BJ (cell line): ENCODE measurements at regions of chr5 and their contacts with region 1.

Region 1: DNA sequence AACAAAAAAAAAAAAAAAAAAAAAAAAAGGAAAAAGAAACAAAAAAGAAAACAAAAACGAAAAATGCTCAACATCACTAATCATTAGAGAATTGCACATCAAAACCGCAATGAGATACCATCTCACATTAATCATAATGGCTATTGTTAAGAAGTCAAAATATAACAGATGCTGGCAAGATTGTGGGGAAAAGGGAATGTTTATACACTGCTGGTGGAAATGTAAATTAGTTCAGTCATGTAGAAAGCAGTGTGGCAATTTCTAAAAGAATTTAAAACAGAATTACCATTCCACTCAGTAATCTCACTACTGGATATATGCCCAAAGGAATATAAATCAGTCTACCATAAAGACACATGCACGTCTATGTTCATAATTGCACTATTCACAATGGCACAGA is 50.4 kb upstream of the PRR16 start:
- DNase-seq: no peak
- H3K4me3 ChIP-seq: no peak overlapping the region
- H3K27me3 ChIP-seq: no peaks in the 10 kb centered on the region
- CTCF ChIP-seq: no peak

Region 2: DNA sequence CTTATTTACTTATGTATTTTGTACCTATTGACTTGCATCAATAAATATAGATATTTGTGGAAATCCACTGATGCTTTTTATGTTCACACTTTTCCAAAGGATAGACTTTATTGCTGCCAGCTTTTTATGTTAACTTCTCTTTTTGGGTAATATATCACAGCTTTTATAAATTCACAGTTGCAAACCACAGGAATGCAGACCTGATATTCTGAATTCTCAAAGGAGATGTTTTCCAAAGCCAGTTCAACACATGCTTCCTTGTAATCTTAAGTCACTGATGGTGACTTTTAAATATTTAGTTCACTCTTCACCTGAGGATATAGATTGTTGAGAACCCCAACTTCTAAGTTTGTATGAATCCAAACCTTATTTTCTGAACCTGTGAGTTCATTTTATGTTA is 173.0 kb before region 1 on chr5:
- CTCF ChIA-PET with region 1: no interaction called
- POLR2A ChIA-PET with region 1: interaction called, 15 read pairs
- DNase-seq: no peak
- H3K4me3 ChIP-seq: no peak overlapping the region
- H3K27me3 ChIP-seq: no peaks in the 10 kb centered on the region
- CTCF ChIP-seq: no peak

Region 3: DNA sequence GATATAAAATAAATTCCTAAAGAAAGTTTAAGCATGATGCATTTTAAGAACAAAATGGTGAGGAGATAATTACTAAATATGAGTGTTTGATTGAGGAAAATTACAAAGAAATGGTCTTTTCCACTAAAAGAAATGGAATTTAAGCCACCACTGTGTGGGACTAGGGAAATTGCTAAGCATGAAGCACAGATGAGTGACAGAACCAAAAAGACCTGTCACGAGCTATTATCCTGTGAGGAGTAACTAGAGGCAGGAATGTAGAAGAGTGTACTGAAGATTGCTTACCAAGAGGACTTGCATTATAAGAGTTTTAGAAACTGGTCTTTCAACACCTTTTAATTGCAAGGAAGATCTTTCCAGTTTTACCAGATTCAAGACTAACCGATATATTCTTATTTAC is 143.2 kb before region 1 on chr5:
- CTCF ChIA-PET with region 1: no interaction called
- POLR2A ChIA-PET with region 1: no interaction called
- DNase-seq: no peak
- H3K4me3 ChIP-seq: no peak overlapping the region
- H3K27me3 ChIP-seq: no peaks in the 10 kb centered on the region
- CTCF ChIP-seq: no peak

Region 4: GRCh38 chr5:120457839-120458507 is 44.3 kb after region 1 on chr5:
- CTCF ChIA-PET with region 1: no interaction called
- POLR2A ChIA-PET with region 1: no interaction called
- DNase-seq: no peak
- H3K4me3 ChIP-seq: no peak overlapping the region
- H3K27me3 ChIP-seq: no peaks in the 10 kb centered on the region
- CTCF ChIP-seq: peak; percentile 67

Region 5: DNA sequence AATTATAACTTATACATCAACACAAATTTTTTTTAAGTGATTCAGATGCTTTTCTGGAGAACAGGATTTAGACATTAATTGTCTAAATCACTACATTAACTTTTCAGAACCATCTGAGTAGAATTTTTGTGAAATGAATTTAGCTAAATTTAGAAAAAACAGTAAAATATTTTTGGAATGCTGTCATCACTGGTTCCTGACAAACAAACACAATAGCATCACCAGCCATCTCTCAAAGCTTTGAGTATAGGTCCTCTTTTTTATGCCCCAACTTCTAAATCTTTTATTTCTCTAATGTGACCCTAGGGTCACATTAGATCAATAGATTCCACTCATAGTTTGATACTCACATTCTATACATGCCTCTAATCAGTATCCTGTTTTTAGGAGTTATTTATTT is 155.0 kb after region 1 on chr5:
- CTCF ChIA-PET with region 1: no interaction called
- POLR2A ChIA-PET with region 1: no interaction called
- DNase-seq: no peak
- H3K4me3 ChIP-seq: no peak overlapping the region
- H3K27me3 ChIP-seq: no peaks in the 10 kb centered on the region
- CTCF ChIP-seq: no peak